Heart left ventricle (tissue), 16 donors: ENCODE measurements at regions of chr3 and their contacts with region 1.

Region 1: DNA sequence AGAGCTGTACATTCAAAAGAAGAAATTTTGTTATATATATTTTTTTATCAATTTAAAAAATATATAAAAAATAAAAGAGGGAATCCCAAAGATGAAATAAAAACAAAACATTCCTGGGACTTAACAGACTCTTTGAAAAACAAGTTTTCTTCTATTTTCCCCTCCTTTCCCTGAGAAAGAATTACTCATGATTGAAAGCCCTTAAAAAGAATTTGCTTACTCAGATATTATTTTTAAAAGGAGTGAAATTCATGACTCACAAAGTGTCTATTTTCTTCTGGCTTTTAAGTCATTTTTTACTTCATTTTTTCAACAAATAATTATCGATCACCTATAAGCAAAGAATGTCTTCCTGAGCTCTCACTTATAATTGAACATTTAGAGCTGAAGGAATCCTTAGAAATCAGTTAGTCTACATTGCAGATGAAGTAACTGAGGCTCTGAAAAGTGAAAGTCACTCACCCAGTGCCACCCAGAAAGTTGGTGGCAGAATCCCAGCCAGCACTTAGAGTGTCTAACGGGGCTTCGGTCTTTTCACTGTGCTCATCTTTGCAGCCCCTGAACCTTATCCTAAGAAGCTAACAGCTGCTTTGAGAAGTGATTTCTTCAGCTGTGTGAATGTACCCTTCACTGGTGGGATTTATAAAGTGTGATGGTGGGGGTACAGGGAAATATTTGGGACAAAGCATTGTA is 42.5 kb upstream of the NUDT16 start:
- DNase-seq: no peak
- ATAC-seq: no peak
- H3K4me3 ChIP-seq: no peak overlapping the region
- H3K27ac ChIP-seq: peak overlapping the region in 1 of 12 donors; percentile 25
- H3K4me1 ChIP-seq: peaks cover 0 to 20% (median 0%) of the 10 kb centered on the region in 12 donors
- H3K27me3 ChIP-seq: no peaks in the 10 kb centered on the region
- CTCF ChIP-seq: no peak
- POLR2A ChIP-seq: no peak

Region 2: GRCh38 chr3:131361464-131362421 is 22.6 kb after region 1 on chr3:
- intact Hi-C with region 1: loop called in 1 of 10 experiments (anchors 1 kb)
- DNase-seq: peak; percentile 83 to 93 (median 91)
- ATAC-seq: peak; percentile 93 to 97 (median 96)
- H3K4me3 ChIP-seq: peak overlapping the region; percentile 39 to 69 (median 58)
- H3K27ac ChIP-seq: peak overlapping the region; percentile 75 to 93 (median 84)
- H3K4me1 ChIP-seq: peaks cover 0 to 24% (median 6%) of the 10 kb centered on the region in 12 donors
- H3K27me3 ChIP-seq: no peaks in the 10 kb centered on the region
- CTCF ChIP-seq: peak in 1 of 12 donors; percentile 4
- POLR2A ChIP-seq: peak in 1 of 2 donors; percentile 57

Region 3: DNA sequence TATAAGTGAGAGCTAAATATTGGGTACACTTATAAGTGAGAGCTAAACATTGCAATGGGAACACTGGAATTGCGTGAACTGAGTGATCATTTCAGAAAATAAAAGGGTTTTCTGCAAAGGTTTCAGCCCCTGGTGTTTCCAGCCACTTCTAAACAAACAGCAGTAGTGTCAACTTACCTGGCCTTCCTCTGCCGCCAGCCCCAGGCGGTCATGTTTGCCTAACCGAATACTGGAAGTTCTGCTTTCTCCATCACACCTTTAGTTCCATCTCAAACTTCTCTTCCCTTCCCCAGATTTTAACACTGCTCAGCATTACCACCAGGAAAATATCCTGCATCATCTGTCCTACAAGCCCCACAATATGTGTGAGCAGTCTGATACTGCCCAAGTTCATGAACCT is 105.1 kb after region 1 on chr3:
- intact Hi-C with region 1: no loop called
- DNase-seq: no peak
- ATAC-seq: no peak
- H3K4me3 ChIP-seq: no peak overlapping the region
- H3K27ac ChIP-seq: no peak overlapping the region
- H3K4me1 ChIP-seq: peaks cover 0 to 3% (median 0%) of the 10 kb centered on the region in 12 donors
- H3K27me3 ChIP-seq: no peaks in the 10 kb centered on the region
- CTCF ChIP-seq: no peak
- POLR2A ChIP-seq: no peak